MCF 10A (cell line): ENCODE measurements at regions of chr5 and their contacts with region 1.

Region 1: DNA sequence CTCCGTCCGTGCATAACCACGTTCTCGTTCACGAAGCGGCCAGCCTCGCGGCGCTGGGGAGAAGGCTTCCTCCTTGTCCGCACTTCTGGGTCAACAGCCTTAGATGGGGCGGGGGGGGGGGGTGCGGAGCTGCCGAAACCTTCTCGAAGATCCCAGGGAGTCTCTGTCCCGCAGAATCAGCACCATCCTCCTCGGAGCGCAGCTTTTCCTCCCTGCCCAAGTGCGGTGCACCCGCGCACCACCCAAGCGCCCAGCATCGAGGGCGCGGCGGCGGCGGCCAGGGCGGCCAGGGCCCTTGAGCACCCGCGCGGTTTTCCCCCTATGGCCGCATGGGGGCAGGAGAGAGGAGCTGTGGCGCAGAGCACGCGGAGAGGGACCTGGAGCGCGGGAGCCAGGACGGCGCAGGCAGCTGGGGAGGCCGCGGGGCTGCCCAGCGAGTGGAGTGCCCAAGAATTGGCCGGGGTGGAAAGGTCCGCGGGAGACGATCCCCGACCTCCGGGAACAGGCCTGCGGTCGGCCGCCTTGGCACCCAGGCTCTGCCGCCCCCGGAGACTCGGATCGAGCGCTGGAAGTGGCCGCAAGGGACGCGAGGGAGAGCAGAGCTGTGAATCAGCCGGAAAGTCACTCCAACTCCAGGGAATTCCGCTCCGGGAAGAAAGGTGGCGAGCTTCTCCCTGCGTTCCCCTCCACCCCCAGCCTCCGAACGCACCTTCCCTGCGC is 43.1 kb downstream of the TMEM174 start:
- DNase-seq: peak; percentile 86
- H3K4me3 Mint-ChIP-seq: peak overlapping the region; percentile 73
- H3K27ac Mint-ChIP-seq: no peak overlapping the region
- H3K4me1 Mint-ChIP-seq: peaks cover 14% of the 10 kb centered on the region
- H3K27me3 Mint-ChIP-seq: no peaks in the 10 kb centered on the region
- CTCF ChIP-seq: peak; percentile 85

Region 2: DNA sequence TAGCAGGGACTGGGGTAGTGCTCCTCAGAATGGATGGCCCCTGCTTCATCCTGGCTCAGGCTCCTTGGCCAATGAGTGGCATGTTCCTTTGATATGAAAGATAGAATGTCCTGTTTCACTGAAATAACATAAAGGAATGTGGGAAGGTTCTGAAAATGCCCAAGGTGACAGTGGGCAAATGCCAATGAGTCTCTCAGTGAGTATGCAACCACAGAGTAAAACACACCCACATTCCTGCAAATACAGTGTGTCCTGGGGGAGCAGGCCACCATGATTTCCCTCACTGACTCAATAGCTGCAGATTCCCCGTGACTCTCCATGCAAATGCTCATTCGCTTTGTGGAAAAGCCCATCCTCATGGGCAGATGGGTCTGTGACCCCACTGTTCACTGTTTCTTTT is 745.2 kb before region 1 on chr5:
- CTCF ChIA-PET with region 1: no interaction called
- POLR2A ChIA-PET with region 1: no interaction called
- intact Hi-C with region 1: no loop called
- DNase-seq: peak; percentile 72
- H3K4me3 Mint-ChIP-seq: no peak overlapping the region
- H3K27ac Mint-ChIP-seq: peak overlapping the region; percentile 81
- H3K4me1 Mint-ChIP-seq: peaks cover 55% of the 10 kb centered on the region
- H3K27me3 Mint-ChIP-seq: no peaks in the 10 kb centered on the region
- CTCF ChIP-seq: no peak

Region 3: DNA sequence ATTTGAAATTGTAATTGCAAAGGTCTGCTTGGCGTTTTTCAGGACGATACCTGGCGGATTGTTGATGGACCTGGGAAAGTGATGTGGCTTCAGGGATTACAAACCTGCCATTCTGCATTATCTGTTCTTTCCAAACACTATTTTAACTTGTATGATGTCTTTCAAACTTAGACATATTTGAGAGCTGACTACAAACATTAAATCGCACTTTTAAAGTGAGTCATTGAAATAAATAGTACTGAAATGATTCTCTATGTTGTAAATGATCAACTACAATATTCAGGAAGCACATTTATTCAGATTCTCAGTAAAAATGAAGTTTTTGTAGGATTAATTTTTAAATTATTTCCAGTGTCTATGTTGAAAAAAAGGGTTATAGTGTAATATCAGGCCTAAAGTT is 128.0 kb before region 1 on chr5:
- CTCF ChIA-PET with region 1: interaction called, 38 read pairs
- POLR2A ChIA-PET with region 1: interaction called, 3 read pairs
- intact Hi-C with region 1: loop called (anchors 1 kb)
- DNase-seq: no peak
- H3K4me3 Mint-ChIP-seq: no peak overlapping the region
- H3K27ac Mint-ChIP-seq: no peak overlapping the region
- H3K4me1 Mint-ChIP-seq: peaks cover 9% of the 10 kb centered on the region
- H3K27me3 Mint-ChIP-seq: no peaks in the 10 kb centered on the region
- CTCF ChIP-seq: no peak

Region 4: DNA sequence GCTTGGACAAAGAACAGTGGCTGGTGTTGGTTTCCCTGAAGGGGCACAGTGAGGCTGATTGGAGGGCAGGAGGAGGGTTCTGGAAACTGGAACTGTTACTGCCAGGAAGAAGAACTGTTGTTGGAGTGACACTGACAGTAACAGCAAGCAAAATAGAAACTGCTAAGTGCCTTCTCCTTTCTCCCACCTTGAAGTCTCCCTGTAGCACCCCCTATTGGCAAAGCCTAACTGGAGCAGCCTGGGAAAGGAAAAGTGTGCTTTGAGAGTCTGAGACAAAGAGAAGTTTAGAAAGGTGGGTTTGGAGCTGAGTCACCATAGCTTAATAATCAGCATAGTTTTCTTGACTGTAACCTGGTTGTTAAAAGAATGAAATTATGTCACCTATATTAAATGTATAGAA is 45.5 kb before region 1 on chr5:
- CTCF ChIA-PET with region 1: interaction called, 17 read pairs
- POLR2A ChIA-PET with region 1: interaction called, 3 read pairs
- intact Hi-C with region 1: no loop called
- DNase-seq: peak; percentile 62
- H3K4me3 Mint-ChIP-seq: no peak overlapping the region
- H3K27ac Mint-ChIP-seq: no peak overlapping the region
- H3K4me1 Mint-ChIP-seq: no peaks in the 10 kb centered on the region
- H3K27me3 Mint-ChIP-seq: no peaks in the 10 kb centered on the region
- CTCF ChIP-seq: peak; percentile 23

Region 5: GRCh38 chr5:73233347-73234200 is 17.5 kb after region 1 on chr5:
- CTCF ChIA-PET with region 1: interaction called, 30 read pairs
- POLR2A ChIA-PET with region 1: no interaction called
- intact Hi-C with region 1: no loop called
- DNase-seq: no peak
- H3K4me3 Mint-ChIP-seq: no peak overlapping the region
- H3K27ac Mint-ChIP-seq: no peak overlapping the region
- H3K4me1 Mint-ChIP-seq: peaks cover 19% of the 10 kb centered on the region
- H3K27me3 Mint-ChIP-seq: no peaks in the 10 kb centered on the region
- CTCF ChIP-seq: no peak

Region 6: GRCh38 chr5:73280821-73281746 is 65.0 kb after region 1 on chr5:
- CTCF ChIA-PET with region 1: interaction called, 26 read pairs
- POLR2A ChIA-PET with region 1: interaction called, 11 read pairs
- intact Hi-C with region 1: no loop called
- DNase-seq: peak; percentile 96
- H3K4me3 Mint-ChIP-seq: peak overlapping the region; percentile 49
- H3K27ac Mint-ChIP-seq: peak overlapping the region; percentile 72
- H3K4me1 Mint-ChIP-seq: peaks cover 53% of the 10 kb centered on the region
- H3K27me3 Mint-ChIP-seq: no peaks in the 10 kb centered on the region
- CTCF ChIP-seq: no peak

Region 7: DNA sequence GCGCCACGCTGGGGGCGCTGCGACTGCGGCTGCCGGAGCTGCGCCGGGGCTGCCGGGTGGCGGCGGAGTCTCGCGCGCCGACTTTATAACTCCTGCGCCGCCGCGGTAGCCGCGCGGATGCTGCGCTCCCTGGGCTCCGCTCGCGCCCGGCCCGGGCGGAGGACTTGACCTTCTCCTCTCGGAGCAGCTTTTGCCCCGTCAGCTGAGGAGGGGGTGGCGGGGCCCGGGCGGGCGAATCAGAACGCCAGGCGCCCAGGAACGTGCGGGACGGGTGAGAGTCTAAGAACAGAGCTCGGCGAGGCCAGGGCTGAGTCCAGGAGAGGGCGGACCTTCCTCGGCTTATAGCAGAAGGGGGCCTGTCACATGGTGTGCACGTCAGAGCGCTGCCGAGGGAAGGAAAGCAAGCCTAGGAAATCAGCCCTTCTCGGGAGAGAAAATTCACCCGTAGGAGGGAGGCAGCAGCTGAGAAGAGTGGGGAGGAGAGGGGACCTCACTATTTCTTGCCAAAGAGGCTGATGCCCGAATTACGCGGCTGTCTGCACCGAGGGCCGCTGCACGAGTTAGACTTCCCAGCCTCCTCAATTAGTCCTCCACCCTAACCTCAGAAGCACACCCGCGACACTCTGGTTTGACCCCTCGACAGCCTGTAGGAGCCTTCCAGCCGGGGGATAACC is 232.5 kb after region 1 on chr5 and contains the start of gene FOXD1:
- CTCF ChIA-PET with region 1: interaction called, 95 read pairs
- POLR2A ChIA-PET with region 1: interaction called, 60 read pairs
- intact Hi-C with region 1: loop called (anchors 1 kb)
- DNase-seq: peak; percentile 91
- H3K4me3 Mint-ChIP-seq: peak within 1 kb of the TSS; percentile 85
- H3K27ac Mint-ChIP-seq: peak within 1 kb of the TSS; percentile 87
- H3K4me1 Mint-ChIP-seq: peaks cover 11% of the 10 kb centered on the region
- H3K27me3 Mint-ChIP-seq: no peaks in the 10 kb centered on the region
- CTCF ChIP-seq: no peak
- total RNA-seq, gene FOXD1: 46.4 and 50.9 TPM in 2 replicates

Region 8: DNA sequence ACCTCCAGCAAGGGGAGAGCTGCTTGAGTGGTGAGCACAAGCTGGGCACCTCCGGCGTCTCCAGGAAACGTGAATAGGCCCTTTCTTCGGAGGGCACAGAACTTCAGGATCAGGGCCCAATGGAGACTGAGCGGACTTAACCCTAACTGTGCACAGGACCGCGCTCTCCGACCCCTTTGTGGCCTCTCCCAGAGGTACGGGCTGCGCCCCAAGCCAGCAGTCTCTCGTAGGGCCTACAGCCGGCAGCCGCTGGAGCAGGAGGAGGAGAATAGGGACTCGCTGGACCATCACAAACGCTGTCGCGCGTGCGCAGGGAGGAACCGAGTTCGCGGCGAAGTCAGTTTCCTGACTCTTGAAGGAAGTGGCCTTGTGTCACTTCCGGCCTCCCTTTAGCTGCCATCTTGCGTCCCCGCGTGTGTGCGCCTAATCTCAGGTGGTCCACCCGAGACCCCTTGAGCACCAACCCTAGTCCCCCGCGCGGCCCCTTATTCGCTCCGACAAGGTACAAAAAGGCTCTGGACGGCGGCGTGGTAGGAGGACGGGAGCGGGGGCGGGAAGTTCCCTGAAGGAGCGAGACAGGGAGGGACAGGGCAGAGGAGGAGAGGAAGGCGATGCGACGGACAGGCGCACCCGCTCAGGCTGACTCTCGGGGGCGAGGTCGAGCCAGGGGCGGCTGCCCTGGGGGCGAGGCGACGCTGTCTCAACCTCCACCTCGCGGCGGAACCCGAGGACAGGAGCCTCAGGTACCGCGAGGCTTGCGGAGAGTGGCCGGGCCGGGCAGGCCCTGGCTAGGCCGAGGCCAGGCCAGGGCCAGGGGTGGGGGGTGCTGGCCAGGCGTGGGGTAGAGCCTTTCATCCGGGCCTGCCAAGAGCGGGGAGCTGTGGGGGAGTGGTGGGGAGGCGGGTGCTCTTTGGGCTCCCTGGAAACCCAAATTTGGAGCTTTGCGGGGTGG is 282.3 kb after region 1 on chr5 and contains the start of gene BTF3:
- CTCF ChIA-PET with region 1: interaction called, 9 read pairs
- POLR2A ChIA-PET with region 1: interaction called, 25 read pairs
- intact Hi-C with region 1: no loop called
- DNase-seq: peak; percentile 97
- H3K4me3 Mint-ChIP-seq: peak within 1 kb of the TSS; percentile 94
- H3K27ac Mint-ChIP-seq: peak within 1 kb of the TSS; percentile 98
- H3K4me1 Mint-ChIP-seq: peaks cover 15% of the 10 kb centered on the region
- H3K27me3 Mint-ChIP-seq: no peaks in the 10 kb centered on the region
- CTCF ChIP-seq: no peak
- total RNA-seq, gene BTF3: 937 and 946 TPM in 2 replicates